ENCODE measurements at regions of chr9 and their contacts with region 1.

Region 1: GRCh38 chr9:105244003-105244733 is at the start of gene SLC44A1:
- DNase-seq: peak; percentile 100
- ATAC-seq: peak; percentile 99
- total RNA-seq, gene SLC44A1: 16.8 TPM

Region 2: DNA sequence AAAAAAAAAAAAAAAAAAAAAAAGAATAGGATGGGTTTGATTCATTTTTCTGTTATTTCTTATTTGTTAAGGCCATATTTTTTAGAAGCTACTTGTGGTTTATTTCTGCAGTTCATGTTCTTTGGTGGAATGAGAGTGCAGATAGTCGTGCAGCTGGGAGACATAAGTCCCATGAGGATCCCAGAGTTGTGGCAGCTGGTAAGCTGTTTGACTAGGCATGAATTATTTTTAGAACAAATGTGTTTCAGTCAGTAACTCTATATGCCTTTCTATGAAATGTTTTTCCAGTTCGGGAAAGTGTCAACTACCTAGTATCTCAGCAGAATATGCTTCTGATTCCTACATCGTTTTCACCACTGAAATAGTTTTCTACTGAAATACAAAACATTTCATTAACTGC is 485.2 kb before region 1 on chr9:
- intact Hi-C with region 1: no loop called
- DNase-seq: no peak
- ATAC-seq: peak; percentile 45

Region 3: DNA sequence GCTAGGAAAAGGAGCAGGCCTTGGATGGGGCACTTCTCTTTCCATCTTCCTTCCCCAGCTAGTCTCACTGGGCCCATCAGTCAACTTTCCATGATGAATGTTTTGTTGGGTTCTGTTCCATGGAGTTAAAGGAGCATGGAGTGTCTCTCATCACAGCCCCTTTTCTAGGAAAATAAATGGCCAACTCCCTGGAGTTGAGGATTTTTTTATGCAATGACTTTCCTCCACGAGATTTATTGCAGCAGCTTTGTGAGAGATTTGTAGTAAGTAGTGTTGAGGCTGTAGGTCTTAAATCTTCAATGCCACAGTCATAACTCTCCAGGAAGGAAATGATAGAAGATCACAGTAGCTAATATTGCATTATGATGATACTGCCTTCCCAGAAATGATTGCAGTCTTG is 45.3 kb before region 1 on chr9:
- intact Hi-C with region 1: no loop called
- DNase-seq: no peak
- ATAC-seq: no peak

Region 4: GRCh38 chr9:105295986-105296385 is 51.8 kb after region 1 on chr9:
- intact Hi-C with region 1: loop called (anchors 2 kb)
- DNase-seq: no peak
- ATAC-seq: no peak

Region 5: GRCh38 chr9:105341434-105342144 is 97.4 kb after region 1 on chr9:
- intact Hi-C with region 1: loop called (anchors 5 kb)
- DNase-seq: no peak
- ATAC-seq: no peak

Region 6: DNA sequence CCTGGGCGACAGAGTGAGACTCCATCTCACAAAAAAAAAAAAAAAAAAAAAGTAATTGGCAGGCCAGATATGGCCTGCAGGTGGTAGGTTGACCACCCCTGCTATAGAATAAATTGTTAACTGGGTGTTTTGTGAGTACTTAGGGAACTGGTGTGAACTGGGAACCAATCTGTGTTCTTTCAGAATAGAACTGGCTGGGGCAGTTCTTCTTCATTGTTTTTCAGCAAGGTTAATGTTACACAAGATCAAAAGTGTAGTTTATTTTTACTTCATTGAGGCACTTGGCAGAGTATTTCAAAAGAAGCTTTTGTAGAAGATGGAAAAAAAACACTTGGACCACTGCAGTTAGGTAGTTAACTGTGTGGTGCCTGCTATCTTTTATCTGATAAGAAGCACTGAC is 127.5 kb after region 1 on chr9:
- intact Hi-C with region 1: no loop called
- DNase-seq: no peak
- ATAC-seq: no peak

Region 7: GRCh38 chr9:105405514-105406131 is 161.5 kb after region 1 on chr9:
- intact Hi-C with region 1: loop called (anchors 10 kb)
- DNase-seq: no peak
- ATAC-seq: no peak